ENCODE measurements at regions of chr3 and their contacts with region 1.

Region 1: DNA sequence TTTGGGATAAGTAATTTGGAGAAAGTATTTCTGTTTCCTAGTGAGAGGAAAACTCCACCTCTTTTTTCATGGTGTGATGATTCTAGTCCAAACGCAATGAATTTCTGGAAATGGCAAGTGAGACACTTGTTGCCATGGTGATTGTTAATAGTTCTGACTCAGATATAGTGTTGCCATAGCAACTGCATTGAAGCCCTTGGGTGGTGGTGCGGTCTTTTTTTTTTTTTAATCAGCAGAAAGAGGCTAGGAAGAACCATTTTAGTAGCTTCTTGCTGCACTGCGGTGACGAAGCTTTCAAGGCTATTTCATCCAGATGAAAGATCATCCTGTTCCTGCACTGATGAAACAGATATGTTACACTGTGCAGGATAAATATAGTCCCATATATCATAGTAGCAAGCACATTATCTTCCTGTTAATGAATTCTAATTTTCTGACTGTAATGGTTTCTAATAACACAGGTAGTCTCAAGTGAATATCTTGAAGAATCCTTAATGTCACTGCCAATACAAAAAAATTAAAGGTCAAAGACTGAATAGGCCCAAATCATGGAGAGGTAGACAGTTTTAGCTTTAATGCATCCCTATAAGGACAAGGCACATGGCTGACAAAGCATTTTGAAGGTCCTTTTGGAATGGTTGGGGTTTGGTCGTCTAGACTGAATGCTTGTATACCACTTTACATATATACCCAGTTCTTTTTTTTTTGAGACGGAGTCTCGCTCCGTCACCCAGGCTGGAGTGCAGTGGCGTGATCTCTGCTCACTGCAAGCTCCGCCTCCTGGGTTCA is 125.1 kb upstream of the ZBTB20 start:
- DNase-seq: peak; percentile 66
- ATAC-seq: no peak
- H3K4me3 ChIP-seq: no peak overlapping the region
- H3K27ac ChIP-seq: no peak overlapping the region
- H3K4me1 ChIP-seq: no peaks in the 10 kb centered on the region
- H3K27me3 ChIP-seq: no peaks in the 10 kb centered on the region
- CTCF ChIP-seq: no peak
- POLR2A ChIP-seq: no peak
- RAD21 ChIP-seq: no peak

Region 2: GRCh38 chr3:115239717-115240116 is 32.5 kb before region 1 on chr3:
- CTCF ChIA-PET with region 1: no interaction called
- POLR2A ChIA-PET with region 1: no interaction called
- dilution Hi-C with region 1: no loop called
- in situ Hi-C with region 1: no loop called
- intact Hi-C with region 1: no loop called
- DNase-seq: peak; percentile 100
- ATAC-seq: peak; percentile 99
- H3K4me3 ChIP-seq: peak overlapping the region; percentile 3; the same call in 1 of the 2 replicates
- H3K27ac ChIP-seq: peak overlapping the region; percentile 31; the same call in 1 of the 2 replicates
- H3K4me1 ChIP-seq: no peaks in the 10 kb centered on the region
- H3K27me3 ChIP-seq: no peaks in the 10 kb centered on the region
- CTCF ChIP-seq: no peak
- POLR2A ChIP-seq: peak; percentile 50
- RAD21 ChIP-seq: peak; percentile 26; the same call in 1 of the 2 replicates

Region 3: GRCh38 chr3:115254492-115255196 is 17.6 kb before region 1 on chr3:
- CTCF ChIA-PET with region 1: no interaction called
- POLR2A ChIA-PET with region 1: interaction called, 16 read pairs
- dilution Hi-C with region 1: no loop called
- in situ Hi-C with region 1: no loop called
- intact Hi-C with region 1: no loop called
- DNase-seq: no peak
- ATAC-seq: no peak
- H3K4me3 ChIP-seq: no peak overlapping the region
- H3K27ac ChIP-seq: no peak overlapping the region
- H3K4me1 ChIP-seq: no peaks in the 10 kb centered on the region
- H3K27me3 ChIP-seq: no peaks in the 10 kb centered on the region
- CTCF ChIP-seq: no peak
- POLR2A ChIP-seq: no peak
- RAD21 ChIP-seq: no peak